T-cell (primary cell): ENCODE measurements at regions of chr6 and their contacts with region 1.

Region 1: DNA sequence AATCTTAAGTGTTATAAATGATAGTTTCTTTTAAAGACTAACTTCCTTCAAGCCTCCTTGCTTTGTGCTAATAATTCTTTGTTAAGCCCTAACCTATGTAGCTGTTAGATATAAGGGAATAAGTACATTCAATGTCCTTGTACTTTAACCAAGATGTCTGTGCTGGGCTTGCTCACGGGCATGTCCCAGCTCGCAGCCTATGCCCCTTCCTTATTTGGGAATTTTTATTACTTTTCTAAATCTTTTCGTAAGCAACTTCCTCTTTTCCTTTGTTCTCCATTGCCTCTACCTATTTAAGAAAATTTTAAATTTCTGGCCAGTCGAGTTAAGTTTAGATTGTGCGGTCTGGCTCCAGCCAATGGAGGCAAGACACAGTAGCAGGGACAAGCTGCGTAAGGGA is 26.0 kb upstream of the CDK19 start:
- DNase-seq: no peak
- ATAC-seq: no peak
- H3K4me3 ChIP-seq: no peak overlapping the region
- H3K4me3 Mint-ChIP-seq: no peak overlapping the region
- H3K27ac ChIP-seq: no peak overlapping the region
- H3K27ac Mint-ChIP-seq: no peak overlapping the region
- H3K4me1 ChIP-seq: no peaks in the 10 kb centered on the region
- H3K4me1 Mint-ChIP-seq: no peaks in the 10 kb centered on the region
- H3K27me3 ChIP-seq: no peaks in the 10 kb centered on the region
- H3K27me3 Mint-ChIP-seq: no peaks in the 10 kb centered on the region

Region 2: DNA sequence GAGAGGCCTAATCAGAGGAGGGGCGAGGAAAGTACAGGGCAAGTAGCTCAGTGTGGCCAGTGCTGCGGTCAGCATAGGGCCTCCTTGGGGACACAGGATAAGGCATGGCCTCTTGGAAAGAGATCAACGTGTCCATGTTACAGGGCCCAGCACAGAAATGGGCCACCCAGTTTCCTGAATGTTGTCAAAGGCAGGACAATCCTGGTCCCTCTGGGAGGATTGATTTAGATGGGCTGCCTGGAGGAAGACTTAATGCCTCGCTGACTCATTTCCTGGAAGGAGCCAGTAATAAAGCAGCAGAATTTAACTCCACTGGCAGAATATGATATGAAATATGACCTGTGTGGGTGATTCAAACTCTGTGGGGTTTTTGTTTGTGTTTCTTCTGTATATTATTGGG is 442.5 kb before region 1 on chr6:
- CTCF ChIA-PET with region 1: no interaction called
- POLR2A ChIA-PET with region 1: interaction called in 1 of 2 experiments, 10 read pairs
- DNase-seq: no peak
- ATAC-seq: no peak
- H3K4me3 ChIP-seq: no peak overlapping the region
- H3K4me3 Mint-ChIP-seq: peak overlapping the region in 2 of 3 donors; percentile 25 to 53
- H3K27ac ChIP-seq: no peak overlapping the region
- H3K27ac Mint-ChIP-seq: no peak overlapping the region
- H3K4me1 ChIP-seq: no peaks in the 10 kb centered on the region
- H3K4me1 Mint-ChIP-seq: no peaks in the 10 kb centered on the region
- H3K27me3 ChIP-seq: peaks cover 0 to 6% of the 10 kb centered on the region in 2 experiments
- H3K27me3 Mint-ChIP-seq: peaks cover 3 to 6% of the 10 kb centered on the region in 2 donors

Region 3: GRCh38 chr6:110554966-110555460 is 286.3 kb before region 1 on chr6:
- CTCF ChIA-PET with region 1: no interaction called
- POLR2A ChIA-PET with region 1: no interaction called
- DNase-seq: no peak
- ATAC-seq: no peak
- H3K4me3 ChIP-seq: no peak overlapping the region
- H3K4me3 Mint-ChIP-seq: no peak overlapping the region
- H3K27ac ChIP-seq: no peak overlapping the region
- H3K27ac Mint-ChIP-seq: no peak overlapping the region
- H3K4me1 ChIP-seq: peaks cover under 1 to 13% of the 10 kb centered on the region in 2 experiments
- H3K4me1 Mint-ChIP-seq: peaks cover 12 to 20% (median 13%) of the 10 kb centered on the region in 3 donors
- H3K27me3 ChIP-seq: peaks cover 0 to 6% of the 10 kb centered on the region in 2 experiments
- H3K27me3 Mint-ChIP-seq: peaks cover 4 to 7% of the 10 kb centered on the region in 2 donors

Region 4: DNA sequence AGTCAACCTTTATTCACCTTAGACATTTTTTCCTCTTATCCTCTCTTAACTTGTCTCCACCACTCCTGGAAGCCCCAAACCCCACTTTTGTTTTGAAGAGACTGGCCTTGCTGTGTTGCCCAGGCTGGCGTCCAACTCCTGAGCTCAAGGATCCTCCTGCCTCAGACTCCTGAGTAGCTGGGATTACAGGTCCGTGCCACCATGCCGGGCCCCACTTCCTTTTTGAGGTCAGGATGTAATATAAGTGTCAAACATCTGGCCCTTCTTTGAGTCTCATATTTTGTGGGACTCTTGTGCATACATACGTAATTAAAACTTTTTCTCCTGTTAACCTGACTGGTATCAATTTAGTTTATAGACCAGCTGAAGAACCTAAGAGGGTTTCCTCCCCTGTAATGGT is 24.6 kb before region 1 on chr6:
- CTCF ChIA-PET with region 1: no interaction called
- POLR2A ChIA-PET with region 1: no interaction called
- DNase-seq: peak in 2 of 35 experiments; percentile 2 to 20
- ATAC-seq: no peak
- H3K4me3 ChIP-seq: no peak overlapping the region
- H3K4me3 Mint-ChIP-seq: peak overlapping the region; percentile 94 to 99 (median 99)
- H3K27ac ChIP-seq: peak overlapping the region; percentile 81
- H3K27ac Mint-ChIP-seq: peak overlapping the region; percentile 72 to 99
- H3K4me1 ChIP-seq: peaks cover 11 to 15% of the 10 kb centered on the region in 2 experiments
- H3K4me1 Mint-ChIP-seq: peaks cover 21 to 29% (median 28%) of the 10 kb centered on the region in 3 donors
- H3K27me3 ChIP-seq: no peaks in the 10 kb centered on the region
- H3K27me3 Mint-ChIP-seq: no peaks in the 10 kb centered on the region

Region 5: GRCh38 chr6:110933912-110934311 is 92.6 kb after region 1 on chr6:
- CTCF ChIA-PET with region 1: no interaction called
- POLR2A ChIA-PET with region 1: no interaction called
- DNase-seq: no peak
- ATAC-seq: no peak
- H3K4me3 ChIP-seq: no peak overlapping the region
- H3K4me3 Mint-ChIP-seq: no peak overlapping the region
- H3K27ac ChIP-seq: no peak overlapping the region
- H3K27ac Mint-ChIP-seq: no peak overlapping the region
- H3K4me1 ChIP-seq: no peaks in the 10 kb centered on the region
- H3K4me1 Mint-ChIP-seq: peaks cover 0 to 7% (median 2%) of the 10 kb centered on the region in 3 donors
- H3K27me3 ChIP-seq: no peaks in the 10 kb centered on the region
- H3K27me3 Mint-ChIP-seq: peaks cover 0 to 3% of the 10 kb centered on the region in 2 donors